Activated B cell treated with CpG ODN at 0.5 μM for 24 hours (primary cell): ENCODE measurements at regions of chr3 and their contacts with region 1.

Region 1: DNA sequence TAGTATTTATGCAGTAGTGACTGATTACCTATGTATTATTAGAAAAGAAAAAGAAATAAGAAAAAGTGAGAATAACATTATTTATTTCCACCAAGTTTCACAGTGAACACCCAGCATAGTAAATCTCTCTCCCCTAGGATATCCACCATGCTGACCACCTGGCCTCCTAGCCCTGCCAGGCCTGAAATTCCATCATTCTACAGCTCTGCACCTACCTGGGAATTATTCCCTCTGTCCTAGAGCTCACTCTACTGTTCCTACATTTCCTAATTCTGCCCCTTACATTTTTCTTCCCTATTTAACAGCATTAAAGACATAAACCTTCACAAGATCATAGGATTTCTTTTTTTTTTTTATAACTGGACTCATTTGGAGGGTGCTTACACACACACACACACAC is 525.3 kb upstream of the PPP2R3A start:
- DNase-seq: no peak
- ATAC-seq: no peak
- H3K4me3 Mint-ChIP-seq: no peak overlapping the region
- H3K27ac Mint-ChIP-seq: no peak overlapping the region
- H3K4me1 Mint-ChIP-seq: peaks cover 21% of the 10 kb centered on the region
- H3K27me3 Mint-ChIP-seq: no peaks in the 10 kb centered on the region
- CTCF ChIP-seq: no peak

Region 2: DNA sequence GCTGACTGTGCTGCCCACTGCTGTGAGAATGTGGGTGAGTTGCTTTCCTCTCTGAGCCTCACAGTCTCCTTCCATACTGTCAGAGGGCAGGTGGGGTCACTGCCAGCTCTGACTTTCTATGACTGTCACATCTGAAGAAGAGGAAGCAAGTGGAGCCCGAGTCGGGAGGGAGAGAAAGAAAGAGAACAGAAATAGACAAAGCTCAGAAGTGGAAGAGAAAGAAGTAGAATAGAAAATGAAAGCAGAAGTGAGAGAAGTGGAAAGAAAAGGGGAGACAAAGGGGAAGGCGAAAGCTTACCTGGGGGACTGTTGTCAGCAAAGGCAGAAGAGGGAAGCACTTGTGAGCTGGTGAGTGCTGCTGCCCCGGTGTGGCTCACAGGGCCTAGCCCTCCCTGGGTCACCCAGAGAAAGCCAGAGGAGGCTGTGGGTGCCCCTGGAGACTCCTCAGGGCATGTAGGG is 587.3 kb before region 1 on chr3:
- CTCF ChIA-PET with region 1: no interaction called
- POLR2A ChIA-PET with region 1: no interaction called
- intact Hi-C with region 1: loop called (anchors 10 kb)
- DNase-seq: peak; percentile 39
- ATAC-seq: peak; percentile 92
- H3K4me3 Mint-ChIP-seq: peak overlapping the region; percentile 48
- H3K27ac Mint-ChIP-seq: peak overlapping the region; percentile 76
- H3K4me1 Mint-ChIP-seq: peaks cover 31% of the 10 kb centered on the region
- H3K27me3 Mint-ChIP-seq: no peaks in the 10 kb centered on the region
- CTCF ChIP-seq: no peak

Region 3: DNA sequence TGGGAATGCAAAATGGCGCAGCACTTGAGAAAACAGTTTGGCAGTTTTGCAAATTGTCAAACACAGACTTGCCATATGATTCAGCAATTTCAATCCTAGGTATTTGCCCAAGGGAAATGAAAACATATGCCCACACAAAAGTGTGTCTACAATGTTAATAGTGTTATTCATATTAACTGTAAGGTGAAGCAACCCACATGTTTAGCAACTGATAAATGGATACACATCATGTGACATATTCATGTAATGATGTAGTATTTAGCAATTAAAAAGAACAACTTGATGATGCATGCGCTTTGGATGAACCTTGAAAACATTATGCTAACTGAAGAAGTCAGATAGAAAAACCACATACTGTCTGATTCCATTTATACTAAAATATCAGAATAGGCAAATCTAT is 13.7 kb before region 1 on chr3:
- CTCF ChIA-PET with region 1: no interaction called
- POLR2A ChIA-PET with region 1: no interaction called
- intact Hi-C with region 1: no loop called
- DNase-seq: no peak
- ATAC-seq: no peak
- H3K4me3 Mint-ChIP-seq: no peak overlapping the region
- H3K27ac Mint-ChIP-seq: no peak overlapping the region
- H3K4me1 Mint-ChIP-seq: no peaks in the 10 kb centered on the region
- H3K27me3 Mint-ChIP-seq: no peaks in the 10 kb centered on the region
- CTCF ChIP-seq: no peak